Activated CD4-positive, alpha-beta memory T cell treated with anti-CD3 and anti-CD28 coated beads for 36 hours (primary cell): ENCODE measurements at regions of chr17 and their contacts with region 1.

Region 1: GRCh38 chr17:27481327-27481726 is 25.1 kb downstream of the KSR1 start:
- DNase-seq: peak; percentile 76
- H3K4me3 Mint-ChIP-seq: no peak overlapping the region
- H3K27ac Mint-ChIP-seq: peak overlapping the region; percentile 73
- H3K4me1 Mint-ChIP-seq: peaks cover 59% of the 10 kb centered on the region
- H3K27me3 Mint-ChIP-seq: no peaks in the 10 kb centered on the region

Region 2: GRCh38 chr17:27466743-27467375 is 14.5 kb before region 1 on chr17:
- CTCF ChIA-PET with region 1: interaction called, 10 read pairs
- POLR2A ChIA-PET with region 1: interaction called, 9 read pairs
- intact Hi-C with region 1: no loop called
- DNase-seq: peak; percentile 93
- H3K4me3 Mint-ChIP-seq: peak overlapping the region; percentile 68
- H3K27ac Mint-ChIP-seq: peak overlapping the region; percentile 90
- H3K4me1 Mint-ChIP-seq: peaks cover 91% of the 10 kb centered on the region
- H3K27me3 Mint-ChIP-seq: no peaks in the 10 kb centered on the region